CD14-positive monocyte (primary cell): ENCODE measurements at regions of chr19 and their contacts with region 1.

Region 1: GRCh38 chr19:4539693-4540581 is at the start of gene LRG1:
- DNase-seq: peak; percentile 91 to 98 (median 96)
- H3K4me3 ChIP-seq: peak within 1 kb of the TSS in 1 of 3 experiments; percentile 55
- H3K4me3 Mint-ChIP-seq: peak within 1 kb of the TSS; percentile 62 to 85
- H3K27ac ChIP-seq: peak within 1 kb of the TSS; percentile 92 to 98
- H3K27ac Mint-ChIP-seq: peak within 1 kb of the TSS; percentile 97 to 99 (median 98)
- H3K4me1 ChIP-seq: peaks cover 83 to 96% of the 10 kb centered on the region in 2 donors
- H3K4me1 Mint-ChIP-seq: peaks cover 72% of the 10 kb centered on the region
- H3K27me3 ChIP-seq: peaks cover 0 to 2% of the 10 kb centered on the region in 2 donors
- H3K27me3 Mint-ChIP-seq: peaks cover 2 to 11% (median 3%) of the 10 kb centered on the region in 3 donors
- CTCF ChIP-seq: no peak
- polyA plus RNA-seq, gene LRG1: 5.5 to 50.1 (median 9.6) TPM

Region 2: DNA sequence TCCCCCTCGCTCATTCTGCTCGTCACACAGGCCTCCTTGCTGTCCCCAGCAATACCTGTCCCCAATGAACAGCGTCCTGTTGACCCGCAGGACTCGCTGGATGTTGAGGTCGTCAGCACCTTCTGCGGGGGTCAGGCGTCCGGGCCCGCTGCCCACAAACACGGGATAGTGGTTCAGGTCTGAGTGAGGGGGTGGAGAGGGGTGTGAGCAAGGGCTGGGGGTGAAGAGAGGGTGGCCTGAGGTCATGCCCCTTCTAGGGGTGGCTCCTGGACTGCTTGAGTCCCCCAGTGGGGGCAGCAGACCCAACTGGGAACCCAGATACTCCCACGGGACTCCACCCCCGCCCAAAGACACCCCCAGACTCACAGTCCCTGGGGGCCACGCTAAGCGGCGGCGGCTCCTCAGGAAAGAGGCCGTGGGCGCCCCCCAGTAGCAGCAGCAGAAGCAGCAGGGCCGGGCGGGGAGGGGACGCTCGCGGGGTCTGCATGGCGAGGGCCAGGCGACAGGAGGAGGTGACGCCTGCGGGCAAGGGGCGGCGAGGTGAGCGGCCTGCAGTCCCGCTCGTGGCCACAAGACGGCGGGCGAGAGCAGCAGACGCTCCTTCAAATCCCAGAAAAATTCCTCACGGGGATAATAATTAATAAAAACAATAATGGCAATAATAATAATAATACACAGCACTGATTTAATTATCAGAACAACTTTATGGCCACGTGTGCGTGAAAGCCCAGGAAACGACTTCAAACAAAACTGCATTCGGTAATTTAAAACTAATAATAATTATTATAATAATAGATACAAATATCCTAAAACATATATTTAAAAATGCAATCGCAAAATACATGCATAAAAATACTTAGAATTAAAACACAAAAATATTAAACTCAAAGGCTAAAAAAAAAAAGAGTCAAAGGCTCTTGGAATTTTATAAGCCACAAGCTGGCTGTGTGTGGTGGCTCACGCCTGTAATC is 18.3 kb after region 1 on chr19:
- intact Hi-C with region 1: loop called in 1 of 2 experiments (anchors 2 kb)
- DNase-seq: peak in 2 of 3 donors; percentile 58 to 61
- H3K4me3 ChIP-seq: peak overlapping the region in 1 of 3 experiments; percentile 49
- H3K4me3 Mint-ChIP-seq: peak overlapping the region in 1 of 2 donors; percentile 66
- H3K27ac ChIP-seq: peak overlapping the region in 1 of 2 donors; percentile 83
- H3K27ac Mint-ChIP-seq: peak overlapping the region in 5 of 7 donors; percentile 84 to 98 (median 97)
- H3K4me1 ChIP-seq: peaks cover 47 to 58% of the 10 kb centered on the region in 2 donors
- H3K4me1 Mint-ChIP-seq: peaks cover 47% of the 10 kb centered on the region
- H3K27me3 ChIP-seq: no peaks in the 10 kb centered on the region
- H3K27me3 Mint-ChIP-seq: peaks cover 0 to 12% (median 2%) of the 10 kb centered on the region in 3 donors
- CTCF ChIP-seq: peak; percentile 100

Region 3: DNA sequence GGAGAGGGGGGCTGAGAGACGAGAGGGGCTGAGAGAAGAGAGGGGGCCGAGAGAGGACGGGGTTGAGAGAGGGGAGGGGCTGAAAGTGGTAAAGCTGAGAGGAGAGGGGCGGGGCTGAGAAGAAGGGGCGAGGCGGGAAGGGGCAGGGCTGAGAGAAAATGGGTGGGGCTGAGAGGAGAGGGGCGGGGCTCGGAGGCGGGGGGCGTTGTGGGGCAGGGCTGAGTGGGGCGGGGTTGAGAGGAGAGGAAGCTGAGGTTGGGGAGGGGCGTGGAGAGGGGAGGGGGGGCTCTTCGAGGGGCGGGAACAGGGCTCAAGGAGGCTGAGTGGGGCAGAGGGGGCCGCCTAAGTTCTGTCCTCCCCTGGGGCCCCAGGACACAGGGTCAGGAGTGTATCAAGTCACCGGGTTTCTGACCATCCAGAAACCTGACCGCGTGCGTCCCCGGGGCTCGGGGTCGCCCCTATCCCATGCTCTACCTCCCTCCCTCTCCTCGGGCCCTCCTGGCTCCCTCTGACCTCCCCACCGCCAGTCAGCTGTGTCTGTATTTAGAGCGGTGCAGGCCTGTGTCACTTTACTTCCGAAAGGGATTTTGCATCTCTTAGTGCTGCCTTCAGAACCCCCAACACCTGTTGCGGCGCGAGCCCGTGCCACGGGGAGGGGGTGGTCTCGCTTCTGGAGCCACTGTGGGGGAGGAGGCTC is 58.2 kb after region 1 on chr19:
- intact Hi-C with region 1: loop called in 1 of 2 experiments (anchors 2 kb)
- DNase-seq: peak; percentile 49 to 72 (median 64)
- H3K4me3 ChIP-seq: peak overlapping the region in 2 of 3 experiments; percentile 6 to 63
- H3K4me3 Mint-ChIP-seq: peak overlapping the region in 1 of 2 donors; percentile 77
- H3K27ac ChIP-seq: no peak overlapping the region
- H3K27ac Mint-ChIP-seq: peak overlapping the region in 4 of 7 donors; percentile 25 to 30 (median 28)
- H3K4me1 ChIP-seq: peaks cover 14 to 19% of the 10 kb centered on the region in 2 donors
- H3K4me1 Mint-ChIP-seq: peaks cover 17% of the 10 kb centered on the region
- H3K27me3 ChIP-seq: peaks cover 8 to 25% of the 10 kb centered on the region in 2 donors
- H3K27me3 Mint-ChIP-seq: peaks cover 39 to 61% (median 56%) of the 10 kb centered on the region in 3 donors
- CTCF ChIP-seq: no peak